ENCODE measurements at regions of chr2 and their contacts with region 1.

Region 1: GRCh38 chr2:38466876-38467767 is 90.0 kb upstream of the ATL2 start:
- DNase-seq: no peak

Region 2: DNA sequence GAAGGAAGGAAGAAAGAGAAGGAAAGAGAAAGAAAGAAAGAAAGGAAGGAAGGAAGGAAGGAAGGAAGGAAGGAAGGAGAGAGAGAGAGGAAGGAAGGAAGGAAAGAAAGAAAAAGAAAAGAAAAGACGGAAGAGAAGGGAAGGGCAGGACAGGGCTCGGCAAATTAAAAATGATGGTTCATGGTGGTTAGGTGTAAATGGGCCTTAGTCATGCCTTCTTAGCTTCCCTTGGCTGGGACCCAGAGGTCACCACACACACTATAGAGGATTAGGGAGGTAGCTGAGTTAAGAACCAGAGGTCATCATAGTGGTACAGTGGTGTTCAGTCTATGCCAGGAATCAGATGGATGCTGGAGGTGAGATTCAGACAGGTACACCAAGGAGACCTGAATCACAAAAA is 80.7 kb before region 1 on chr2:
- intact Hi-C with region 1: no loop called
- DNase-seq: no peak

Region 3: GRCh38 chr2:38485734-38486133 is 18.6 kb after region 1 on chr2:
- intact Hi-C with region 1: loop called in 1 of 2 experiments (anchors 1 kb)
- DNase-seq: no peak

Region 4: DNA sequence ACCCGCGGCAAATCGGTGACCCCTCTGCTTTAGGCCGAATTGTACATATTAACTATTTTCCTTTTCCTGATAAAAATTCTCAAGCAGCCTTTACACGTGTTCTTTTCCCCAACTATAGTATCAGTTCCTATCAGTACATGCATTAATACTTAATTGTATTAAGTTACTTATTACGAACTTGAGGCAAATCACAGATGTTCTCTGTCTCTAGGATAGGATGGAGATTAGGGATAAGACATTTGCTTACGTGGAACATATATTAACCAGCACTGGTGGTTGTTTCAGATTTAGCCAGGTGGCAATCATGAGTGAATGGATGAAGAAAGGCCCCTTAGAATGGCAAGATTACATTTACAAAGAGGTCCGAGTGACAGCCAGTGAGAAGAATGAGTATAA is 311.6 kb after region 1 on chr2:
- intact Hi-C with region 1: no loop called
- DNase-seq: no peak